Activated naive CD4-positive, alpha-beta T cell treated with anti-CD3 and anti-CD28 coated beads for 36 hours (primary cell): ENCODE measurements at regions of chr1 and their contacts with region 1.

Region 1: GRCh38 chr1:198771563-198772153 is 132.8 kb downstream of the PTPRC start:
- DNase-seq: no peak
- H3K4me3 Mint-ChIP-seq: no peak overlapping the region
- H3K27ac Mint-ChIP-seq: no peak overlapping the region
- H3K4me1 Mint-ChIP-seq: peaks cover 5% of the 10 kb centered on the region
- H3K27me3 Mint-ChIP-seq: no peaks in the 10 kb centered on the region

Region 2: DNA sequence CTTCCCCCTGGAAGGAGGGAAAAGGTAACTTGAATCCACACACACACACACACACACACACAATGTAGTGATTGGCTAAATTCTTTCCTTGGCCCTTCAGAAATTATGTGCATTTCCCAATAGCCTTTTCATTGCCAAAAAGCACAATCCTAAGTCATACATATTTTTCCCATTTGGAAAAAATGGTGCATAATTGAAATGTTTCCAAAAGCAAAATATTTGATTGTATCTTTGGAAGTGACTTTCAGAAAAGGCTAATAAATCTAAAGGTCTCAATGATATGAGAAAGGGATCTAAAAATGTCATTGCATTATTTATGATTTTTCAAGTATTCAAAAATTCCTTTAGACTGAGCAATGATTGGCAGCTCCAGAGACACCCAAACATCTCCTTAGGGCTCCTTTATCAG is 658.3 kb before region 1 on chr1:
- CTCF ChIA-PET with region 1: no interaction called
- intact Hi-C with region 1: no loop called
- DNase-seq: no peak
- H3K4me3 Mint-ChIP-seq: no peak overlapping the region
- H3K27ac Mint-ChIP-seq: no peak overlapping the region
- H3K4me1 Mint-ChIP-seq: no peaks in the 10 kb centered on the region
- H3K27me3 Mint-ChIP-seq: no peaks in the 10 kb centered on the region

Region 3: GRCh38 chr1:198283222-198283621 is 488.4 kb before region 1 on chr1:
- CTCF ChIA-PET with region 1: no interaction called
- intact Hi-C with region 1: no loop called
- DNase-seq: no peak
- H3K4me3 Mint-ChIP-seq: no peak overlapping the region
- H3K27ac Mint-ChIP-seq: no peak overlapping the region
- H3K4me1 Mint-ChIP-seq: no peaks in the 10 kb centered on the region
- H3K27me3 Mint-ChIP-seq: no peaks in the 10 kb centered on the region

Region 4: DNA sequence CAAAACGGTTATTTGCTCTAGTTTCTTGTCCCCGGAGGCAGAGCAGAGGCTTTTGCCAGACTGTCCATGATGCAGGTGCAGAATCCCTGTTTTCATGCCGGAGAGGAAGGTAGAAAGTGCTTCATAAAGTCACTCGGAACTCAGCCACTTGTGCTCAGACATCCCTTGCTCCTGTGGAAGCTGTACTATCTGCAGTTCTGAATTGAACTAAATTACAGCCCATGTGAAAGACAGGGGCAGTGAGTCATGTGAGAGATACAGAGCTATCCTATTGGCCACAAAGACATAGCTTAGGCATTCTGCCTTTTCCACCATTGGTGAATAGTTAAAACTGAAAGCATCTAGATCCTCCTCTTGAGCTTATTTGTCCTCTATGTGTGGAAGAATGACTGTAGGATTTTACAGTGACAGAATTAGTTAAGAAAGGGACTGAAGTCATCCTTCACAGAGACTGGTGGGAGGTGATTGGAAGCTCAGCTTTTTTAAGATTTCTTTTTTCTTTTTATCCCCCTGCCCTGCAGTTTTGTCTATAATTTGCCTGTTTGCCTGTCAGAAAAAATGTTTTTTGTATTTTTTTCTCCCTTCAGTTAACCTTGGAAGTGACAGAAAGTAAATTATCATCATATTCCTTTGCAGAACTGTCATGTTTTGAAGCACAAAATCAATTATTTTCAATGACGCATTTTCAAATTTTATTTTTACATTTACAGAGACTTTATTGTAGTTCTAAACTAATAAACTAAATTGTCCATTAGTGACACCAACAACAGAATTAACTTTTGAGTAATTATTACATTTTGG is 165.8 kb after region 1 on chr1:
- CTCF ChIA-PET with region 1: no interaction called
- intact Hi-C with region 1: no loop called
- DNase-seq: peak; percentile 72
- H3K4me3 Mint-ChIP-seq: peak overlapping the region; percentile 89
- H3K27ac Mint-ChIP-seq: peak overlapping the region; percentile 84
- H3K4me1 Mint-ChIP-seq: peaks cover 21% of the 10 kb centered on the region
- H3K27me3 Mint-ChIP-seq: no peaks in the 10 kb centered on the region

Region 5: DNA sequence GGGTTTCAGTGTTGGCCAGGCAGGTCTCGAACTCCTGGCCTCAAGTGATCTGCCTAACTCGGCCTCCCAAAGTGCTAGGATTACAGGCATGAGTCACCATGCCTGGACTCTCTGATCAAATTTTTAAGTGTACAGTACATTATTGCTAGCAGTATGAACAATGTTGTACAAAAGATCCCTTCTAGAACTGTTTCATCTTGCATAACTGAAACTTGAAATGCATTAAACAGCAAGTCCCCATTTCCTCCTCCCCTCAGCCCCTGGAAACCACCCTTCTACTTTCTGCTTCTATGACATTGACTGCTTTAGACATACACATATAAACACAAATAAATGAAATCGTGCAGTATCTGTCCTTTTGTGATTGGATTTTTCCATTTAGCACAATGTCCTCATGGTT is 330.6 kb after region 1 on chr1:
- CTCF ChIA-PET with region 1: no interaction called
- intact Hi-C with region 1: no loop called
- DNase-seq: peak; percentile 14
- H3K4me3 Mint-ChIP-seq: no peak overlapping the region
- H3K27ac Mint-ChIP-seq: no peak overlapping the region
- H3K4me1 Mint-ChIP-seq: peaks cover 4% of the 10 kb centered on the region
- H3K27me3 Mint-ChIP-seq: no peaks in the 10 kb centered on the region

Region 6: DNA sequence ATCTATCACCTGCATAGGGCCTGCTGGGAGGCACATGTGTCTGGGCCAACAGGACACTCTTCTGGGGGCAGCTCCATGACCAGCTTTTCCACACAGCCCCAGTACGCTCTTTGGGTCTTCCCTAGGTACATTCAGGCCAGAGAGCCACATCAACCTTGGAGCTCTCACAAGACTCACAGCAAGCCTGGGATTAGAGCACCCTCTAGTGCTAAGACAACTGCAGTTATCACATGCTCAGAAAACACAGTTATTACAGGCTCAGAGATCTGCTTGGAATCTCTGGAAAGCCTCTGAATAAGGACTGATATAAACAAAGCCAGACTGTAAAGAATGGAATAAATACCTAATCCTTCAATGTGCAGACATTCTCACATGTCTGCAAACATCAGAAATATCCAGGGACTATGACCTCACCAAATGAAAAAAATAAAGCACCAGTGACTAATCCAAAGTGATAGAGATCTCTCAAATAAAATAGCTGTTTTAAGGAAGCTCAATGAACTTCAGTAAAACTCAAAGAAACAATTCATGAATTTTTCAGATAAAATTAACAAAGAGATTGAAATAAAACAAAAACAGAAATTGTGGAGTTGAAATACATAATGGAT is 692.0 kb after region 1 on chr1:
- CTCF ChIA-PET with region 1: no interaction called
- intact Hi-C with region 1: loop called (anchors 5 kb)
- DNase-seq: peak; percentile 44
- H3K4me3 Mint-ChIP-seq: no peak overlapping the region
- H3K27ac Mint-ChIP-seq: no peak overlapping the region
- H3K4me1 Mint-ChIP-seq: no peaks in the 10 kb centered on the region
- H3K27me3 Mint-ChIP-seq: peaks cover 5% of the 10 kb centered on the region

Region 7: GRCh38 chr1:199551967-199552565 is 780.4 kb after region 1 on chr1:
- CTCF ChIA-PET with region 1: no interaction called
- intact Hi-C with region 1: loop called (anchors 5 kb)
- DNase-seq: peak; percentile 61
- H3K4me3 Mint-ChIP-seq: no peak overlapping the region
- H3K27ac Mint-ChIP-seq: no peak overlapping the region
- H3K4me1 Mint-ChIP-seq: no peaks in the 10 kb centered on the region
- H3K27me3 Mint-ChIP-seq: peaks cover 10% of the 10 kb centered on the region